ENCODE measurements at regions of chr2 and their contacts with region 1.

Region 1: DNA sequence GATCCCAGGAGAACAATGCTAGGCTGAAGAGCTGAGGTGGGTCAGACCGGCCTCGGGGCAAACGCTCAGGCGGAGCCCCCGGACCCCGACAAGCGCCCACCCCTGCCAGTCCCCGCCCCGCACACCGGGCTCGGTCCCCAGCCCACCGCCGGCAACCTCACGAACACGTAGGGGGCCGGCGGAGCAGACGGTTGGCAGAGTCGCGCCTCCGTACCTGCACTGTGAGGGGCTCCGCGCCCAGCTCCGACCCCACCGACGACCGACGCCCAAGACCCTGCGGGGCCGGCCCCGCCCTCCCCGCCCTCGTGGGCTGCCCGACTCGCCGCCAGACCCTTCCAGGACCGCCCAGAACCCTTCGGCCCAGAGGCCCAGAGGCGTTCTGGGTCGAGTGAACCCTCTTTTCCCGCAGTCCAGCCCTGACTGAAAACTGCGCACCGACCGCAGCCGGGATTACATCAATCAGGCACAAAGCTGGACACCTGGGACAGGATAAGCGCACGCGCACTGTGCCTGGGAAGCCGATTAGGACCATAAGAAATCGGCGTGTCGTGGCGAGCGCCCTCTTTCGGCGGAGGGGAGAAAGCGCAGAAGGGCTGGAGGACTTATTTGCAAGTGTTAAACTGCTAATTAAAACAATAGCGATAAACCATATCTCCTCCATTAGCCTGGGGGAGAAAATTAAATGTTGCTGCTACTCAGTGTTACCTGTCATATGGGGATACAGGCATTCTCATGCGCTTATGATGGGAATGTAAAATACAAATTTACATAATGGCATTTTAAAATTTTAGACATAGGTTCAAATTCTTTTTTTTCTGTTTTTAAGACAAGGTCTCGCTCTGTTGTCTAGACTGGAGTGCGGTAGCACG is 11.7 kb upstream of the DCTN1 start:
- DNase-seq: peak; percentile 86
- H3K4me3 ChIP-seq: peak overlapping the region; percentile 87 to 90
- H3K27ac ChIP-seq: peak overlapping the region; percentile 85 to 91
- H3K4me1 ChIP-seq: peaks cover 6% of the 10 kb centered on the region
- H3K27me3 ChIP-seq: no peaks in the 10 kb centered on the region
- CTCF ChIP-seq: peak; percentile 95 to 98 (median 96)
- POLR2A ChIP-seq: no peak

Region 2: GRCh38 chr2:74421221-74421870 is 29.5 kb after region 1 on chr2 and contains the starts of genes C2orf81 and WDR54:
- intact Hi-C with region 1: loop called (anchors 2 kb)
- DNase-seq: peak; percentile 60
- H3K4me3 ChIP-seq: peak within 1 kb of the TSS; percentile 51 to 62
- H3K27ac ChIP-seq: peak within 1 kb of the TSS; percentile 52 to 75
- H3K4me1 ChIP-seq: no peaks in the 10 kb centered on the region
- H3K27me3 ChIP-seq: no peaks in the 10 kb centered on the region
- CTCF ChIP-seq: peak in 1 of 4 experiments; percentile 13
- POLR2A ChIP-seq: peak; percentile 48
- total RNA-seq, gene C2orf81: 6.1 to 6.8 TPM
- total RNA-seq, gene WDR54: 11.4 to 19.4 TPM

Measured in prostate gland (tissue), 2 donors.